CD8-positive, alpha-beta T cell (primary cell): ENCODE measurements at regions of chr6 and their contacts with region 1.

Region 1: DNA sequence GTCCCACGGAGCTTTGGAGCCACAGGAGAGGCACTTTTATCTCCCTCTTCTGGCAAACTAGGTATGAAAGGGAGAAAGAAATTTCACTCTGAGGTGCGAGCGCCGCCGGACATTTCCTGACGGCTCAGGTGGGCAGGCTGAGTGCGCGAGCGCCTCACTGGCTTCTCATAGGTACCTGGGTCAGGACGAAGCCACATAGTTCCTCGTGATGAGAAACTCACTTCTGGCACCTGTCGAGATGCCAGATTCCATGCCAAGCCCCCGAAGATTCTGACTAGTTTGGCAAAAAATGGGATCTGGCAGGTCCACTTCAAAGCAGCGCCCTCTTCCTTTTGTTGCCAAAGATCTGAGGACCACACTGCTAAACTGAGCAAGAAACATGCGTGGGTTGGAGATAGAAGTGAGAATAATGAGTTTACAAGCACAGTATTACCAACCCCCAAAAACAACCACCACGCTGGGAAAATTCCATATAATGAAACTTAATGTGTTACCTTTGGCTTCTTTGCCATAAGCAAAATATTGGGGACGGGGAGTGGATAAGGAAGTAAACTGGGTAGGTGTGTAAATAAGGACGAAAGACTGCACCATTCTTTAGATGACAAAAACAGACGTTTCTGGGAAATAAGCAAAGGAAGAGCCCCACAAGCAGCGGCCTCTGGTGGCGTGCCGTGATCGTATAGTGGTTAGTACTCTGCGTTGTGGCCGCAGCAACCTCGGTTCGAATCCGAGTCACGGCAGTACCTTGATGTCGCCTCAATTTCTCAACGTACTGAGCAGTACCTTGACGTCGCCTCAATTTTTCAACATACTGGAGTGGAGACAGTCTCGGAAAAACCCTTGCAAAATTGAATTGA is 89.8 kb upstream of the PRSS16 start:
- DNase-seq: peak; percentile 72 to 91 (median 86)
- ATAC-seq: peak; percentile 75
- H3K4me3 ChIP-seq: peak overlapping the region; percentile 55 to 60
- H3K4me3 Mint-ChIP-seq: peak overlapping the region; percentile 85
- H3K27ac ChIP-seq: peak overlapping the region; percentile 18 to 23
- H3K27ac Mint-ChIP-seq: peak overlapping the region; percentile 87
- H3K4me1 ChIP-seq: peaks cover 13% of the 10 kb centered on the region
- H3K4me1 Mint-ChIP-seq: peaks cover 38% of the 10 kb centered on the region
- H3K27me3 ChIP-seq: no peaks in the 10 kb centered on the region
- H3K27me3 Mint-ChIP-seq: no peaks in the 10 kb centered on the region
- CTCF ChIP-seq: peak; percentile 48

Region 2: GRCh38 chr6:26124781-26125685 is 1032.7 kb before region 1 on chr6:
- CTCF ChIA-PET with region 1: no interaction called
- POLR2A ChIA-PET with region 1: no interaction called
- intact Hi-C with region 1: no loop called
- DNase-seq: peak in 6 of 9 experiments; percentile 8 to 58 (median 36)
- ATAC-seq: no peak
- H3K4me3 ChIP-seq: peak overlapping the region; percentile 78 to 98
- H3K4me3 Mint-ChIP-seq: peak overlapping the region; percentile 94
- H3K27ac ChIP-seq: peak overlapping the region; percentile 87 to 94
- H3K27ac Mint-ChIP-seq: peak overlapping the region; percentile 99
- H3K4me1 ChIP-seq: peaks cover 34% of the 10 kb centered on the region
- H3K4me1 Mint-ChIP-seq: peaks cover 42% of the 10 kb centered on the region
- H3K27me3 ChIP-seq: no peaks in the 10 kb centered on the region
- H3K27me3 Mint-ChIP-seq: no peaks in the 10 kb centered on the region
- CTCF ChIP-seq: no peak

Region 3: DNA sequence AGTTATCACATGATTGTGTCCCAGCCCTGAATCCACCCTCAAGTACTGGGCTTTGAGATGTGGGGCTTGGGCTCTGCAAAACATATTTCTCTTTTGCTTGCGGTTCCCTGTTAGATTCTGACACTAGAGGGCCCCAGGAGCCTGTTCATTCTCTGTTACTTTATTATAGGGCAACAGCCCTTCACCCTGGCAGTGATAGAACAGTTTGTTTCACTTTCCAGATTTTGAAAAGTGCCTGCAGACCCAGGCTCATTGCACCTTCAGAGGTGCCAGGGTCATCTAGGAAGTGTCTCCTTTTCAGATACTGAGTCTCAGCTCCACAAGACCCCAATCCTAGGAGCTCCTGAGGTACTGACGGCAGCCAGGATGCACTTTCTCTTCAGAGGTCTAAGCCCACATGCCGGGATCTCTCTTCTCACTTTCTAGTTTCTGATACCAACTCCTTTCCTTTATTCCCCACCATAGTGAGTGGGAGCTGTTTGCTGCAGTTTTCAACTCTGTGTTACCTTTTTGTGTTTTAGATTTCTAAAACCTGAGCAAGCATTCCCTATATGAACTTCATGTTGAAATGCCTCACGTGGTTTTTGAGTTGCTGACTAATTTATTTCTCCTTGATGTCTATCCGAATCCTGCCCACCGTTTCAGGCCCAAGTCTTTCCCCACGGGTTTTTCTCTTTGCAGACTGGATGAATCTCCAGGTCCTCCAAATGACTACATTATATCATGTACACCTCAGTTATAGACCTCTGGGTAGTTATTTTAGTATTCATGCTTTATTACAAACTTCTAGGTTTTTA is 550.1 kb before region 1 on chr6:
- CTCF ChIA-PET with region 1: no interaction called
- POLR2A ChIA-PET with region 1: no interaction called
- intact Hi-C with region 1: loop called (anchors 1 to 10 kb)
- DNase-seq: peak in 7 of 9 experiments; percentile 37 to 78 (median 64)
- ATAC-seq: peak; percentile 98
- H3K4me3 ChIP-seq: peak overlapping the region in 1 of 2 experiments; percentile 16
- H3K4me3 Mint-ChIP-seq: peak overlapping the region; percentile 70
- H3K27ac ChIP-seq: no peak overlapping the region
- H3K27ac Mint-ChIP-seq: peak overlapping the region; percentile 3
- H3K4me1 ChIP-seq: no peaks in the 10 kb centered on the region
- H3K4me1 Mint-ChIP-seq: peaks cover 10% of the 10 kb centered on the region
- H3K27me3 ChIP-seq: no peaks in the 10 kb centered on the region
- H3K27me3 Mint-ChIP-seq: peaks cover 6% of the 10 kb centered on the region
- CTCF ChIP-seq: peak; percentile 72

Region 4: DNA sequence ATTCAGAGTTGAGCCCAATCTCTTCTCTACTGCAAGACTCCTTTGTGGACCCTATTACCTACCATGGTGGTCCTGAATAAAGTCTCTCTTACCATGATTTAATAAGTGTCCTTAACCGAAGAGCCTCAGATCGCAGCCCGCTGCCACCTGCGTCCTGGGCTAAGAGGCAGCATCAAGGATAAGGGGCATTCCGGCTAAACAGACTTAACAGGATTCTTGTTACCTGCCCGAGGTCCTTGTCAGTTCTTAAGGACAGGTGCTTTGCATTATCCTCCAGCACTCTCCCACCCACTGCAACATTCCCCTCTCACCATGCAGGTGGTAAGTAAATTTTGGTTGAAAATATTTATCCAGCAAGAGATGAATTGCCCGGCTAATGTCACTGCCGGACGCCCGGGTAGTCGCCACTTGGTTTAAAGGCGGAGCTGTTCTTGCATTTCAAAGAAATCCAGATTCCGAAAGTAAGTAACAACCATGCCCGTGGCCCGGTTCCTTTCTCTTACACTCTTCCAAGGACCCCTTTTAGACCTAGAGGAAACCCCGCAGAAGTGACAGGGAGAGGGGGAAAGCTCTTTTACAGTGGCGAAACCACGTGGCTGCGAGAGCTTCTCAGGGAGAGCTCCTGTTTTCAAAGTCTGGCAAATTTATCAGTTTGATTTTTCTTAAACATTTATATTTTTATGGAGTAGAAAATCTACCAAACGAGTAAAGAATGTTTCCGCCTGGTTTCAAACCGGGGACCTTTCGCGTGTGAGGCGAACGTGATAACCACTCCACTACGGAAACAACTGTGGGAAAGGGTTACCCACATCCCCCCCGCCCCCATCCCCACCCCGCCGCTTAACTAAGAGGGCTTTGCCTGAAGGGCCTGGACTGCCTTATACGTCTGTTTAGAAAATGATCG is 47.9 kb after region 1 on chr6:
- CTCF ChIA-PET with region 1: no interaction called
- POLR2A ChIA-PET with region 1: no interaction called
- intact Hi-C with region 1: no loop called
- DNase-seq: peak in 5 of 9 experiments; percentile 5 to 63 (median 27)
- ATAC-seq: peak; percentile 49
- H3K4me3 ChIP-seq: no peak overlapping the region
- H3K4me3 Mint-ChIP-seq: no peak overlapping the region
- H3K27ac ChIP-seq: no peak overlapping the region
- H3K27ac Mint-ChIP-seq: no peak overlapping the region
- H3K4me1 ChIP-seq: peaks cover 9% of the 10 kb centered on the region
- H3K4me1 Mint-ChIP-seq: peaks cover 8% of the 10 kb centered on the region
- H3K27me3 ChIP-seq: peaks cover 6 to 12% of the 10 kb centered on the region in 2 experiments
- H3K27me3 Mint-ChIP-seq: peaks cover 54% of the 10 kb centered on the region
- CTCF ChIP-seq: no peak

Region 5: GRCh38 chr6:27312146-27312949 is 154.7 kb after region 1 on chr6 and contains the start of gene POM121L2:
- CTCF ChIA-PET with region 1: interaction called, 7 read pairs
- POLR2A ChIA-PET with region 1: no interaction called
- intact Hi-C with region 1: loop called (anchors 2 kb)
- DNase-seq: peak; percentile 28 to 79 (median 52)
- ATAC-seq: peak; percentile 65
- H3K4me3 ChIP-seq: peak within 1 kb of the TSS; percentile 71 to 80
- H3K4me3 Mint-ChIP-seq: peak within 1 kb of the TSS; percentile 81
- H3K27ac ChIP-seq: no peak within 1 kb of the TSS
- H3K27ac Mint-ChIP-seq: no peak within 1 kb of the TSS
- H3K4me1 ChIP-seq: peaks cover 12% of the 10 kb centered on the region
- H3K4me1 Mint-ChIP-seq: peaks cover 10% of the 10 kb centered on the region
- H3K27me3 ChIP-seq: peaks cover 10 to 12% of the 10 kb centered on the region in 2 experiments
- H3K27me3 Mint-ChIP-seq: peaks cover 72% of the 10 kb centered on the region
- CTCF ChIP-seq: peak; percentile 79
- total RNA-seq, gene POM121L2: not detected

Region 6: DNA sequence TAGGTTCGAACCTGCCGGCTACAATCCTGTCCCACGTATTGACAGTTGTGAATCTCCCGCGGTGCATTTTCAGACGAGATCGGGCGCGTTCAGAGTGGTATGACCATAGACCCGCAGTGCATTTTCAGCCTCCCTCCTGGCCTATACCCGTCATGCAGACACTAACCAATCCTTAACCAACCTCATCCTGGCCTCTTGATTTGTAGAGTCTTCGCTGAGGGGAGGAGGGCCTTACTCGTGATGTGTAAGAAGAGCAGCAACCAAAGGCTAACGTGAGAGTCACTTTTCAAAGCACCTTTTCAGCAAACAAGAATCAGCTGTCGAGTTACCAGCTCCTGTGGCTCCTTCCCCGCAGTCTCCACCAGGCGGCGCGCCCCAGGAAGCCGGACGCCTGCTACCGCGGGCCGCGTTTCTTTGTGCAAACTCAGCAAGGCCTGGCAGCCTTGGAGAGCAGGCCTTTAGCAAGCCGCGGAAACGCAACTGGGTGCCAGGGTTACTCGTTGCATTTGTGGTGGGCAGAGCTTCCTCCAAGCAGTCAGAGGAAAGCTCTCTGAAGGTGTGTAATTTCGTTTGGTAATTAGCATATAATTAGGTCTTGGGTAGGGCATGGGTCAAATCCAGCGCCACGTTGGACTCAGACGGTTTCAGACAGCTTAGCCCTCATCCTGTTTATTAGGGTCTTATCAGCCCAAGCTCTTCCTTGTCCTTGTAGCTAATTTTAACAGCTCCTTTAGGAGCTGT is 614.7 kb after region 1 on chr6:
- CTCF ChIA-PET with region 1: interaction called, 23 read pairs
- POLR2A ChIA-PET with region 1: no interaction called
- intact Hi-C with region 1: no loop called
- DNase-seq: peak; percentile 76 to 92 (median 84)
- ATAC-seq: peak; percentile 96
- H3K4me3 ChIP-seq: no peak overlapping the region
- H3K4me3 Mint-ChIP-seq: no peak overlapping the region
- H3K27ac ChIP-seq: peak overlapping the region in 1 of 2 experiments; percentile 8
- H3K27ac Mint-ChIP-seq: peak overlapping the region; percentile 56
- H3K4me1 ChIP-seq: peaks cover 11% of the 10 kb centered on the region
- H3K4me1 Mint-ChIP-seq: peaks cover 11% of the 10 kb centered on the region
- H3K27me3 ChIP-seq: no peaks in the 10 kb centered on the region
- H3K27me3 Mint-ChIP-seq: peaks cover 11% of the 10 kb centered on the region
- CTCF ChIP-seq: peak; percentile 85

Region 7: DNA sequence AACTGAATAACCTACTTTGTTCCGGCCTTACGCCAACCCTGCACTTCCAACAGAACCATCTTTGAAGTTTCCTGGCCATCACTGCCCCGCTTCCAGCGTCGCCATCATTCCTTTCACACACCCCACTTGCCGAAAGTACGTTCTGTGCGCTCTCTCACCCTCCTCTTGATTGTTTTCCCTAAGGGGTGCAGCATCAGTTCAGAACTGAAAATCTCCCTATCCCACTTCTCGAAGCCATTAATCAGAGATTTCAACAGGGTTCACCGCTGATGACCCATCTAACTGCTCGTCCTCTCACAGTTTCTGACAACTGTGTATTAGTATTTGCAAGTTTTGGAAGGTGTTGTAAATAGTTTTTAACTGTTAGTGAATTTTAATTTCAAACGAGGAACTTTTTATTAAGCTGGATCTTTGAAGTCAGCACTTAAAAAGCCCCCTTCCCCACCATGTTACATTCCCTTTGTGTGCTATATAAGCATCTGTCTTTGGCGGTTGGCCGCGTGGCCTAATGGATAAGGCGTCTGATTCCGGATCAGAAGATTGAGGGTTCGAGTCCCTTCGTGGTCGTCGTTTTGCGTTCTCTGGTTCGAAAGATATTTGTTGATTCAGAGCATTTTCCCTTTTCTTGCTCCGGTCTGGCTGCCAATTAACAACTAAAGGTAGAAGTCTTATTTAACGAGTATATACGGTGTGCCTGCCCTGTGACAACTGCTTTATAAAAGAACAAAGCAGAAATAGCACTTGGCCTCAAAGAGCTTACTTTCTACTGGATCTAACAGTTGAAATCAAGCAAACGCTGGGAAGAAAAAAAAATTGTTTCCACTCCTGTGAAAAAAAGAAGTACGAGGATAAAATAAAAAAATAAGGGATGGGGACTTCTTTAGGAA is 1723.5 kb after region 1 on chr6:
- CTCF ChIA-PET with region 1: interaction called, 3 read pairs
- POLR2A ChIA-PET with region 1: no interaction called
- intact Hi-C with region 1: loop called in 1 of 2 experiments (anchors 5 kb)
- DNase-seq: peak; percentile 14 to 81 (median 53)
- ATAC-seq: no peak
- H3K4me3 ChIP-seq: peak overlapping the region; percentile 37 to 45
- H3K4me3 Mint-ChIP-seq: peak overlapping the region; percentile 86
- H3K27ac ChIP-seq: no peak overlapping the region
- H3K27ac Mint-ChIP-seq: peak overlapping the region; percentile 89
- H3K4me1 ChIP-seq: peaks cover 29% of the 10 kb centered on the region
- H3K4me1 Mint-ChIP-seq: peaks cover 52% of the 10 kb centered on the region
- H3K27me3 ChIP-seq: peaks cover 0 to 3% of the 10 kb centered on the region in 2 experiments
- H3K27me3 Mint-ChIP-seq: peaks cover 4% of the 10 kb centered on the region
- CTCF ChIP-seq: no peak